ENCODE measurements at regions of chr10 and their contacts with region 1.

Region 1: DNA sequence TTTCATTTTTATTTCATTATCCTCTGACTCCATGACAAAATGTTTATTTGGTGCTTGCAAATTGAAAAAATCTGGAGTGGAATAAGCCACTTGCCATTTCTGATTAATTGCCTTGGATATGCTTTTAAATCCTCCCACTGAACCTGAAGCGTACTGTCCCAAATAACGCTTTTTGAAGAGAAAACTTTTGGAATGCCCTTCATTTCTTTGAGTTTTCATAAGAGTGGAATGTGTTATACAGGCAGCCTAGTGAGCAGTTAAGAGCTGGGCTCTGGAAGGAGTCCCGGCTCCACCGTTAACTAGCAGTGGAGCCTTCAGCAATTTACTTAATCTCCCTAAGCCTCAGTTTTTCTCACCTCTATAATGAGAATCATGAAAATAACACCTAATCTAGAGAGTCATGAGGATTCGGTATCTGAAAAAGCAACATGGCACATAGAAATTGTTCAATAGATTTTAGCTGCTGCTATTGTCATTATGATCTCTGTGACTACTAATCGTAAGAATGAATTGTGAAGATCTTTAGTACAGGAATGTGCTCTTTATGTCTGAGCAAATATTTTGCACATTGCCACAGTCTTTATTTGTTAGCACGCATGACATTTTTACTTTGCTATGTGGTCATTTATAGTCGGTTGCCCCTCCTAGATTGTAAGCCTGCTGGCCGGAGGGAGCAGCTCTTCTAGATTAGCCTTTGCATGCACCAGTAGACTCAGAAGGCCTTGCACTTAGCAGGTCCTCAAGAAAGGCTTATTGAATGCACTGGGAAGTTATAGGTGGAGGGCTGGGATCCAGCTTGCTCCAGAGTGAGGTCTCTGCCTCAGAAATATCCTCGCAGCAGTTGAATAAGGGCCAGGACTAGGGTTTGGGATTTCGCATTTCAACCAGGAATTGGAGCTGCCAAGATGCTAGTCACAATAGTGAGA is 59.4 kb downstream of the PLCE1 start:
- DNase-seq: peak in 1 of 3 donors; percentile 45
- ATAC-seq: peak; percentile 38 to 39
- H3K4me3 ChIP-seq: no peak overlapping the region
- H3K27ac ChIP-seq: no peak overlapping the region
- H3K4me1 ChIP-seq: no peaks in the 10 kb centered on the region
- H3K27me3 ChIP-seq: no peaks in the 10 kb centered on the region

Region 2: DNA sequence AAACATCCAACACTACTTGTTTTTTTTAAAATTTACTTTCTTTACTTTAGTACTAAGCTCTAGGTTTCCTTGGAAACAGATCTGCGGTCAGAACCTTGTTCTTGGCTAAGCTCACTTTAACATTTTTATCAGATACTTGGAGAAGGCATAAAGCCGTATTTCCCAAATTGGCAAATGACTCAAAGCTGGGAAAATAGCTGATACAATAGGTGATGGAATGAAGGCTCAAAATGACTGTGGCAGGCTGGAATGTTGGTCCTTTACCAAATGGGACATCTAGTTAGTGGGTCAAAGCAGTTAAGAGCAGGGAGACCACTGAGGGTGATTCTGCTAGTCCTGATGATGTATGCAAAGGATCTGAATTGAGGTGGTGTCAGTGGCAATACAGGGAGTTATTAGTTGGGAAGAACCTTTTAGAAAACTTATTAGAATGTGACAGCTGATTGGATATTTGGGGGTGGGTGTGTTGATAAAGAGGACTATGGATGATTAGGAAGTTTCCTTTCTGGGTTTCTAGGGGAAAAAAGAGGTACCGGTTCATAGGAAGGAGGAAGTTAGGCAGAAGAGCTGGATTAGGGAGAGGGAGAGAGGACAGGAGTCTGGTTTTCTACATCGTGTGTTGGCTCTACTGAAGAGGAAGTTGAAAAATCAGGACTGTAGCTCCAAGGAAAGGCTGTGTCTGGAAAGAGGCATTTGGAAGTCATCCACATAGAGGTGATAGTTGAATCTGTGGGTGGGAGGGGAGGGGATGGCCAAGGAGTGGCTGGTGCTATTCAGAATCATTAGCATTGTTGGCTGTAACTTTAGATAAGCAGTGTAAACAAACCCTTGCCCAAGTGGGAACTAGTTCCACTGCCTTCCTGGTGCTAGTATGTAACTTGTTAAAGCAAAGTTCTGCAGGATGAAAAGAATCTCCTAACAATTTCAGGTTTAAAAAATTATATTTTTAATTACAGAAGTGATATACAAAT is 46.3 kb before region 1 on chr10:
- intact Hi-C with region 1: loop called in 1 of 4 experiments (anchors 10 kb)
- DNase-seq: no peak
- ATAC-seq: peak; percentile 80 to 92
- H3K4me3 ChIP-seq: no peak overlapping the region
- H3K27ac ChIP-seq: peak overlapping the region; percentile 80
- H3K4me1 ChIP-seq: peaks cover 2% of the 10 kb centered on the region
- H3K27me3 ChIP-seq: no peaks in the 10 kb centered on the region